HCT116 (cell line): ENCODE measurements at regions of chr16 and their contacts with region 1.

Region 1: DNA sequence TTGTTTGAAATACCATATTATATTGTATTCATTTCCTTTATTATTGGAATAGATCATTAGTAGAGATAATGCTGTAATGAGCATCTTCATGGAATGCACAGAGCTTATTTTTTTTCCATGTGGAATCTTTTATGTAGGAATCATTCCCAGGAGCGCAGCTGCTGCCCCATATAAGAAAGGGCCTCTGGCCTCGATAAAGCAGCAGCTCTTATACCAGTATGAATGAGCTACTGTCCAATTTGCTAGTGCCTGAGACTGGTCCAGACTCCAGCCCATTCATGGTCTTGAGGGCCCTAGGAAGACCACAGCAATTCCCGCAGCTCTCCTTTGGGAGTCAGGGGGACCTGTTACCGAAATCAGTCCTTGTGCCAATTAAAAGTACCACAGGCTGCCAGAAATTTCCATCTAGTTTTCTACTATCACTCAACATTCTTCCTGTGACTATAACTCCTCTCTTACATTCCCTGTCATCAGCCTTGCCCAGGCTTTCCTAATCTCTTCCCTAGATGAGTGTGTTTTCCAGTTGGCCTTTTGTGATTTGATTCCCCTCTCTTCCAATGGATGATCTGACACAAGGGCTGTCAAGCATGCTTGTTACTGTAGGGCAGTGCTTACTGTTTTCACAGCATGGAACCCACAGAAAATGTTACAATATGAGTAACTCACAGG is 1.9 kb downstream of the ZNF843 start:
- DNase-seq: no peak
- ATAC-seq: no peak
- H3K4me3 ChIP-seq: no peak overlapping the region
- H3K27ac ChIP-seq: no peak overlapping the region
- H3K4me1 ChIP-seq: peaks cover 5 to 18% of the 10 kb centered on the region in 2 experiments; a peak in 3 of 4 replicates
- H3K27me3 ChIP-seq: no peaks in the 10 kb centered on the region
- CTCF ChIP-seq: no peak
- POLR2A ChIP-seq: no peak
- RAD21 ChIP-seq: no peak

Region 2: GRCh38 chr16:31108035-31108793 is 332.4 kb before region 1 on chr16 and contains the start of gene BCKDK:
- CTCF ChIA-PET with region 1: no interaction called
- POLR2A ChIA-PET with region 1: no interaction called
- RAD21 ChIA-PET with region 1: no interaction called
- intact Hi-C with region 1: loop called (anchors 5 kb)
- DNase-seq: peak; percentile 42
- ATAC-seq: peak; percentile 91
- H3K4me3 ChIP-seq: peak within 1 kb of the TSS; percentile 83 to 98
- H3K27ac ChIP-seq: peak within 1 kb of the TSS; percentile 89
- H3K4me1 ChIP-seq: peaks cover 10 to 26% of the 10 kb centered on the region in 2 experiments; a peak in 3 of 4 replicates
- H3K27me3 ChIP-seq: no peaks in the 10 kb centered on the region
- CTCF ChIP-seq: no peak
- POLR2A ChIP-seq: peak; percentile 44
- RAD21 ChIP-seq: no peak
- total RNA-seq, gene BCKDK: 60.7 TPM

Region 3: GRCh38 chr16:31451681-31452351 is 11.2 kb after region 1 on chr16:
- CTCF ChIA-PET with region 1: interaction called, 36 read pairs
- POLR2A ChIA-PET with region 1: interaction called, 8 read pairs
- RAD21 ChIA-PET with region 1: no interaction called
- intact Hi-C with region 1: no loop called
- DNase-seq: peak; percentile 65
- ATAC-seq: peak; percentile 96
- H3K4me3 ChIP-seq: no peak overlapping the region
- H3K27ac ChIP-seq: peak overlapping the region; percentile 30; the same call in 1 of the 2 replicates
- H3K4me1 ChIP-seq: peaks cover 27 to 44% of the 10 kb centered on the region in 2 experiments
- H3K27me3 ChIP-seq: no peaks in the 10 kb centered on the region
- CTCF ChIP-seq: peak; percentile 51 to 82 (median 69); a peak in 5 of 6 replicates
- POLR2A ChIP-seq: no peak
- RAD21 ChIP-seq: peak; percentile 55